ENCODE measurements at regions of chr14 and their contacts with region 1.

Region 1: DNA sequence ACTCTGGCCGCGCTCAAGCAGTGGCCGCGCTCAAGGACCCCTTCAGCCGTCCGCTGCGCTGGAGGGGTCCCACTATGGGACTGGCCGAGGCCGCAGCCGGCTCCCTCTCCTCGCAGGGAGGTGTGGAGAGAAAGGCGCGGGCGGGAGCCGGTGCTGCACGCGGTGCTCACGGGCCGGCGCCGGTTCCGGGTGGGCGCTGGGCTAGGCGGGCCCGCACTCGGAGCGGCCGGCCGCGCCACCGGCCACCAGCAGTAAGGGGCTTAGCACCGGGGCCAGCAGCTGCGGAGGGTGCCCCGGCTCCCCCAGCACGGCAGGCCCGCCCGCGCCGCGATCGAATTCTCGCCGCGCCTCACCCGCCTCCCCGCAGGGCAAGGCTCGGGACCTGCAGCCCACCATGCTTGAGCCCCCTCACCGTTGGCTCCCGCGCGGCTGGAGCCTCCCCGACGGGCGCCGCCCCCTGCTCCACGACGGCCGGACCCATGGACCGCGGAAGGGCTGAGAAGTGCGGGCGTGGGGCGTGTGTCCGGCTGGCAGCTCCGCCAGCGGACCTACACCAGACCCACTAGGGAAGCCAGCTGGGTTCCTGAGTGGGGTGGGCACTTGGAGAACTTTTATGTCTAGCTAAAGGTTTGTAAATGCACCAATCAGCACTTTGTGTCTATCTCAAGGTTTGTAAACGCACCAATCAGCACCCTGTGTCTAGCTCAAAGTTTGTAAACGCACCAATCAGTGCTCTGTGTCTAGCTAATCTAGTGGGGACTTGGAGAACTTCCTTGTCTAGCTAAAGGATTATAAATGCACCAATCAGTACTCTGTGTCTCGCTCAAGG is 49.5 kb downstream of the KLHL28 start:
- DNase-seq: no peak
- ATAC-seq: no peak
- H3K4me3 ChIP-seq: no peak overlapping the region
- H3K27ac ChIP-seq: no peak overlapping the region
- H3K4me1 ChIP-seq: no peaks in the 10 kb centered on the region; a peak in 1 of 5 replicates
- H3K27me3 ChIP-seq: no peaks in the 10 kb centered on the region
- CTCF ChIP-seq: no peak
- EP300 ChIP-seq: no peak
- POLR2A ChIP-seq: no peak
- RAD21 ChIP-seq: no peak

Region 2: DNA sequence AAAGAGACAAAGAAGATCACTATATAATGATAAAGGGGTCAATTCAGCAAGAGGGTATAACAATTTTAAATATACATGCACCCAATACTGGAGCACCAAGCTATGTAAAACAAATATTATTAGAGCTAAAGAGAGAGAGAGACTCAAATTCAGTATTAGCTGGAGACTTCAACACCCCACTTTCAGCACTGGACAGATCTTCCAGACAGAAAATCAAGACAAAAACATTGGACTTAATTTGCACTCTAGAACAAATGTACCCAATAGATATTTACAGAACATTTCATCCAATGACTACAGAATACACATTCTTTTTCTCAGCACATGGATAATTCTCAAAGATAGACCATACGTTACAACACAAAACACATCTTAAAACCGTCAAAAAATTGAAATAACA is 31.5 kb before region 1 on chr14:
- CTCF ChIA-PET with region 1: no interaction called
- POLR2A ChIA-PET with region 1: no interaction called
- in situ Hi-C with region 1: no loop called
- intact Hi-C with region 1: no loop called
- DNase-seq: no peak
- ATAC-seq: no peak
- H3K4me3 ChIP-seq: no peak overlapping the region
- H3K27ac ChIP-seq: no peak overlapping the region
- H3K4me1 ChIP-seq: no peaks in the 10 kb centered on the region
- H3K27me3 ChIP-seq: no peaks in the 10 kb centered on the region; a peak in 1 of 5 replicates
- CTCF ChIP-seq: no peak
- EP300 ChIP-seq: no peak
- POLR2A ChIP-seq: no peak
- RAD21 ChIP-seq: no peak

Region 3: GRCh38 chr14:45038865-45039264 is 126.6 kb after region 1 on chr14:
- CTCF ChIA-PET with region 1: no interaction called
- POLR2A ChIA-PET with region 1: no interaction called
- in situ Hi-C with region 1: no loop called
- intact Hi-C with region 1: no loop called
- DNase-seq: peak in 1 of 4 experiments; percentile 4
- ATAC-seq: no peak
- H3K4me3 ChIP-seq: no peak overlapping the region
- H3K27ac ChIP-seq: no peak overlapping the region
- H3K4me1 ChIP-seq: no peaks in the 10 kb centered on the region
- H3K27me3 ChIP-seq: no peaks in the 10 kb centered on the region
- CTCF ChIP-seq: no peak
- EP300 ChIP-seq: no peak
- POLR2A ChIP-seq: no peak
- RAD21 ChIP-seq: no peak

Region 4: GRCh38 chr14:45253068-45253753 is 341.0 kb after region 1 on chr14 and contains the start of gene MIS18BP1:
- CTCF ChIA-PET with region 1: no interaction called
- POLR2A ChIA-PET with region 1: no interaction called
- in situ Hi-C with region 1: no loop called
- intact Hi-C with region 1: loop called (anchors 1 kb)
- DNase-seq: peak; percentile 67 to 91 (median 75)
- ATAC-seq: peak; percentile 94
- H3K4me3 ChIP-seq: peak within 1 kb of the TSS; percentile 81
- H3K27ac ChIP-seq: peak within 1 kb of the TSS; percentile 86
- H3K4me1 ChIP-seq: peaks cover 7 to 12% of the 10 kb centered on the region in 2 experiments; a peak in 3 of 5 replicates
- H3K27me3 ChIP-seq: no peaks in the 10 kb centered on the region
- CTCF ChIP-seq: peak; percentile 68 to 78 (median 76)
- EP300 ChIP-seq: 0 out of 2 replicates have a peak, but pooled peaks have one; percentile 15
- POLR2A ChIP-seq: peak; percentile 75
- RAD21 ChIP-seq: peak; percentile 11 to 27; a peak in 3 of 4 replicates
- polyA plus RNA-seq, gene MIS18BP1: 5.0 to 5.5 TPM

Region 5: DNA sequence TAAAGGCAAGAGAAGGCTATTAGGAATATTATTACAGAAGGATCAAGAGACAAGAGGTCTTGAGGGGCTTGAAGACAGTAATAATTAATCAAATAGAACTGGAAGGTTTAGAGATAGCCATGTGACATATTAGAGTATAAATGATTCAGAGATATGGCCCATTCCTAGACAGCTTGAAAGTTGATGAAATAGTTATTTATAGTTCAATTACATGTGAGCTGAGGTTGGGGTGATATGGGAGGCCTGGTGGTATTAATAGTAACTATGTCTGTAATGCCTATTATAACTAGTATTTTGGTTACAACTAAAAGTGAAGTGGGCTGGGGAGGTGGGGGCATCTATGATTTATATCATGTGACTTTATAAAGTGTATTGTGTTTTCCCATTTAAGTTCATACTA is 354.8 kb after region 1 on chr14:
- CTCF ChIA-PET with region 1: interaction called, 7 read pairs
- POLR2A ChIA-PET with region 1: no interaction called
- in situ Hi-C with region 1: loop called (anchors 10 kb)
- intact Hi-C with region 1: loop called (anchors 1 kb)
- DNase-seq: no peak
- ATAC-seq: no peak
- H3K4me3 ChIP-seq: no peak overlapping the region
- H3K27ac ChIP-seq: no peak overlapping the region
- H3K4me1 ChIP-seq: no peaks in the 10 kb centered on the region
- H3K27me3 ChIP-seq: no peaks in the 10 kb centered on the region
- CTCF ChIP-seq: no peak
- EP300 ChIP-seq: no peak
- POLR2A ChIP-seq: no peak
- RAD21 ChIP-seq: no peak

Measured in K562 (cell line).